PC-9 (cell line): ENCODE measurements at regions of chr15 and their contacts with region 1.

Region 1: GRCh38 chr15:71800835-71801745 is 9.3 kb upstream of the NR2E3 start:
- DNase-seq: peak; percentile 60 to 65
- H3K4me3 ChIP-seq: no peak overlapping the region
- H3K27ac ChIP-seq: no peak overlapping the region
- H3K4me1 ChIP-seq: peaks cover 13% of the 10 kb centered on the region
- H3K27me3 ChIP-seq: no peaks in the 10 kb centered on the region
- CTCF ChIP-seq: peak; percentile 85

Region 2: DNA sequence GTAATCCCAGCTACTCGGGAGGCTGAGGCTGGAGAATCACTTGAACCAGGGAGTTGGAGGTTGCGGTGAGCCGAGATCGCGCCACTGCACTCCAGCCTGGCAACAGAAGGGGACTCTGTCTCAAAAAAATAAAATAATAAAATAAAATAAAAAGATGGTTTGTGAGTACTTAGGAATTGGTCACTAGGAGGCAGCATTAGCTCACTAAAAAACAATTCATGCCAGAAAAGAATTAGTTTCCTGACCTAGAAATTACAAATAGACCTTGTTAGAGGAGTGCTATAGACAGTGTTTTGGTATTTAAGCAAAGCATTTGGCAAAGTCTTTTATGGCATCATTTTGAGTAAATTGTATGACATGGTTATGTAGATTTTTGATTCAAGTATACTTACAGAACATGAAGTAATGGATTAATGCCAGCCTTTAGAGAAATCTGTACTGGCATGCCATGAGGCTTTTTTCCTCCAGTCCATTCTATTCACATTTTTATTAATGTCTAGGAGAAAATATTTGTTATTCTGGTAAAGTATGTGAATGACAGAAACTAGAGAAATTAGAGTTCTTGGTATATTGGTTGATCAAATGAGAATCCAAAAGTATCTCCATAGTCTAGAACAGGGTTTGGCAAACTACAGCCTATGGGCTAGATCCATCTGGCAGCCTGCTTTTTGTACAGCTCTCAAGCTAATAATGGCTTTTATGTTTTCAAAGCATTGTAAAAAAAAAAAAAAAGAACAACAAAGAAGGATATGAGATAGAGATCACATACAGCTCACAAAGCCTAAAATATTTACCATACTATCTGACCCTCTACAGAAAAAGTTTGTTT is 826.9 kb before region 1 on chr15:
- CTCF ChIA-PET with region 1: no interaction called
- POLR2A ChIA-PET with region 1: no interaction called
- intact Hi-C with region 1: loop called (anchors 2 kb)
- DNase-seq: peak in 1 of 2 experiments; percentile 1
- H3K4me3 ChIP-seq: no peak overlapping the region
- H3K27ac ChIP-seq: no peak overlapping the region
- H3K4me1 ChIP-seq: no peaks in the 10 kb centered on the region
- H3K27me3 ChIP-seq: no peaks in the 10 kb centered on the region
- CTCF ChIP-seq: peak; percentile 67

Region 3: DNA sequence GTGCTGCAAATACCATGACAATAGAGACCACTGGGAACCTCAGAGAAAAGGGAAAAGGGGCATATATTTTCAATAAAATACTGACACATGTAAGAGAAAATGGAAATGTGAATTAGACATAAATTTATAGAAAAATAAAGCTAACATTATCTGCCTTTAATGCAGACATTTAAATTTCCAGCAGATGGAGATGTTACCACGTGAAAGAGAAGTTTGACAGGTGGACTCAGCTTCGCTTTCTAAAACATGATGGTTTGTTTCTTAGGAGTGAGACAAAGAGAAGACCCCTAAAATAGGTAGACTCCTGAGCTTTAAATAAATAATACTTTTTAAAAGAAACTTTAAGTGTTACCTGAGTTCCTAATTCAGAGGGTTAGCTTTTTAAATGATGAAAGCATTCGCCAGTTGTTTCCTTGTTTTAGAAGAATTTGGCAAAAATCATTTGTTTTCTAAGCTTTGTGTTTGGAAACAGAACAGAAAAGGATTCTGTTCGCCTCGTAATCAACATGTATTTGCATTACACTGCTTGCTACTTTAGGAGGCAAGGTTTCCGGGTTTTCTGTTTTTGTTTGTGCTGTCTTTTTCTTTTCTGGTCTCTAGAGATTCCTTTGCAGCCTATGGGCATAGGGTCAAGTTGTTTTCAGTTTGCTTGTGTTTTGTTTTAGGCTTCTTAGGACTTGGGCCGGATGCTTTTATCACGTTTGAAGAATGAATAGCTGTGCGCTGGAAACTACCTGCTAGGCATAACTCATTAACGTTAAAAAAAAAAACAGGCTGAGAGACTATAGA is 414.4 kb before region 1 on chr15:
- CTCF ChIA-PET with region 1: no interaction called
- POLR2A ChIA-PET with region 1: no interaction called
- intact Hi-C with region 1: loop called (anchors 1 kb)
- DNase-seq: no peak
- H3K4me3 ChIP-seq: no peak overlapping the region
- H3K27ac ChIP-seq: no peak overlapping the region
- H3K4me1 ChIP-seq: 0 out of 2 replicates have a peak, but pooled peaks cover 7% of the 10 kb centered on the region
- H3K27me3 ChIP-seq: no peaks in the 10 kb centered on the region
- CTCF ChIP-seq: peak; percentile 59

Region 4: GRCh38 chr15:71629781-71630474 is 171.2 kb before region 1 on chr15:
- CTCF ChIA-PET with region 1: no interaction called
- POLR2A ChIA-PET with region 1: no interaction called
- intact Hi-C with region 1: no loop called
- DNase-seq: no peak
- H3K4me3 ChIP-seq: no peak overlapping the region
- H3K27ac ChIP-seq: no peak overlapping the region
- H3K4me1 ChIP-seq: no peaks in the 10 kb centered on the region
- H3K27me3 ChIP-seq: no peaks in the 10 kb centered on the region
- CTCF ChIP-seq: no peak

Region 5: DNA sequence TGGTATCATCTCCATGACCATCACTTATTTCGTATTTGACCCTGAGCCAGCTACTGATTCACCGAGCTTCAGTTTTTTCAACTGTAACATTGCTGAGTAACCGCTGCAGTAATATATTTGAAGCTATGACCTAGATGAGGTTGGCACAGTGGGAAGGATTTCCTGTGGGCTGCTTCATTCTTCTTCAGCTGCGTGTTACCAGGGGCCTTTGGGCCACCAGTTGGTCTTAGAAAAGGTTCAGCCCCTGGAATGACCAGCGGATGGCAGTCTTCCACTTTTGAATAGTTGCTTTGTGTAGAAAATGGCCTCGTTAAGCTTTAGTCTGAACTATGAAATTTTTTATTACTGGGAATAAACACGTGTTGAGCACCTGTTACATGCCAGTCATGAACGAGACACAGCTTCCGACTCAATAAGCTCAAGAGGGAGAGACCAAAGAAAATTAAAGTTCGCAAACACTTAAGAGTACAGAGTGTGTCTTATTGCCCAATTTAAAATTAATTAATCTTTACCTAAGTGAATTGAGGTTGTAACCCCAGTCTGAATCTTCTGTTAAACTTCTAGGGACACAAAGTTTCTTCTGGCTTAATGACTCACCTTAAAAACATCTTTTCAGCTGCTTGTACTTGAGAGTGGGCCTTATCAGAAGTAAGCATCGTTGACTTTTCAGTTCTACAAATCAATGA is 48.3 kb before region 1 on chr15:
- CTCF ChIA-PET with region 1: interaction called, 16 read pairs
- POLR2A ChIA-PET with region 1: interaction called, 5 read pairs
- intact Hi-C with region 1: loop called (anchors 1 kb)
- DNase-seq: peak in 1 of 2 experiments; percentile 57
- H3K4me3 ChIP-seq: no peak overlapping the region
- H3K27ac ChIP-seq: peak overlapping the region; percentile 28; the same call in 1 of the 2 replicates
- H3K4me1 ChIP-seq: peaks cover 26% of the 10 kb centered on the region
- H3K27me3 ChIP-seq: no peaks in the 10 kb centered on the region
- CTCF ChIP-seq: no peak; the same call in 1 of the 2 replicates

Region 6: GRCh38 chr15:72155635-72156616 is 354.8 kb after region 1 on chr15:
- CTCF ChIA-PET with region 1: no interaction called
- POLR2A ChIA-PET with region 1: no interaction called
- intact Hi-C with region 1: loop called (anchors 1 kb)
- DNase-seq: peak; percentile 68 to 81
- H3K4me3 ChIP-seq: peak overlapping the region; percentile 4; the same call in 1 of the 2 replicates
- H3K27ac ChIP-seq: no peak overlapping the region
- H3K4me1 ChIP-seq: peaks cover 28% of the 10 kb centered on the region
- H3K27me3 ChIP-seq: no peaks in the 10 kb centered on the region
- CTCF ChIP-seq: peak; percentile 93